HCT116 (cell line): ENCODE measurements at regions of chr19 and their contacts with region 1.

Region 1: GRCh38 chr19:6551607-6552450 is 21.0 kb downstream of the TNFSF9 start:
- DNase-seq: no peak
- ATAC-seq: peak; percentile 98
- H3K4me3 ChIP-seq: peak overlapping the region in 1 of 2 experiments; percentile 38; a peak in 2 of 4 replicates
- H3K27ac ChIP-seq: peak overlapping the region; percentile 49; the same call in 1 of the 2 replicates
- H3K4me1 ChIP-seq: peaks cover 15 to 22% of the 10 kb centered on the region in 2 experiments
- H3K27me3 ChIP-seq: no peaks in the 10 kb centered on the region
- CTCF ChIP-seq: peak; percentile 30 to 65 (median 59); a peak in 5 of 6 replicates
- POLR2A ChIP-seq: no peak
- RAD21 ChIP-seq: peak; percentile 54

Region 2: DNA sequence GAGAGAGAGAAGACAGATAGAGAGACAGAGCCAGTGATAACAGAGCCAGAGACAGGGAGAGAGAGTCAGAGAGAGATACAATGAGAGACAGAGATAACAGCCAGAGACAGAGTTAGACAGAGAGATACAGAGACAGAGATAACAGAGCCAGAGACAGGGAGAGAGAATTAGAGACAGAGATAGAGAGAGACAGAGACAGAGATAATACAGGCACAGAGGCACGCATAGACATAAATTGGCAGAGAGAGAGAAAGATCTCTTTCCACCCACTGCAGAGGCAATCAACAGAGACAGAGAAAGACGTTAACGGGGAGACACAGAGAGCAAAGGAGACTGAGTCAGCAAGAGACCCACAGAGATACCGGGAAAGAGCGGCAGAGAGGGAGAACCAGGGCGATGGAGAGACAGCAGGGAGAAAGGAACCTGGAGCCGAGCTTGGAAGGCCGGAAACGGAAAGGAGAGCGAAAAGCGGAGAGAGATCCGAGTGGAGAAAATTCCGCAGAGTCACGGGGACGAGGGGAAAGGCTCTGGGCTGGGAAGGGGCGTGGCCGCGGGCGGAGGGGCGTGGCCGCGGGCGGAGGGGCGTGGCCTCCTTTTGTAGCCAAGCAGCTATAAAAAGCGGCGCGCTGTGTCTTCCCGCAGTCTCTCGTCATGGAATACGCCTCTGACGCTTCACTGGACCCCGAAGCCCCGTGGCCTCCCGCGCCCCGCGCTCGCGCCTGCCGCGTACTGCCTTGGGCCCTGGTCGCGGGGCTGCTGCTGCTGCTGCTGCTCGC is 21.3 kb before region 1 on chr19 and contains the start of gene TNFSF9:
- CTCF ChIA-PET with region 1: no interaction called
- POLR2A ChIA-PET with region 1: interaction called, 12 read pairs
- RAD21 ChIA-PET with region 1: no interaction called
- intact Hi-C with region 1: no loop called
- DNase-seq: peak; percentile 70
- ATAC-seq: peak; percentile 85
- H3K4me3 ChIP-seq: peak within 1 kb of the TSS; percentile 91 to 95
- H3K27ac ChIP-seq: peak within 1 kb of the TSS; percentile 68
- H3K4me1 ChIP-seq: peaks cover 10 to 33% of the 10 kb centered on the region in 2 experiments
- H3K27me3 ChIP-seq: no peaks in the 10 kb centered on the region
- CTCF ChIP-seq: no peak
- POLR2A ChIP-seq: peak; percentile 99
- RAD21 ChIP-seq: no peak
- total RNA-seq, gene TNFSF9: 25.1 TPM

Region 3: DNA sequence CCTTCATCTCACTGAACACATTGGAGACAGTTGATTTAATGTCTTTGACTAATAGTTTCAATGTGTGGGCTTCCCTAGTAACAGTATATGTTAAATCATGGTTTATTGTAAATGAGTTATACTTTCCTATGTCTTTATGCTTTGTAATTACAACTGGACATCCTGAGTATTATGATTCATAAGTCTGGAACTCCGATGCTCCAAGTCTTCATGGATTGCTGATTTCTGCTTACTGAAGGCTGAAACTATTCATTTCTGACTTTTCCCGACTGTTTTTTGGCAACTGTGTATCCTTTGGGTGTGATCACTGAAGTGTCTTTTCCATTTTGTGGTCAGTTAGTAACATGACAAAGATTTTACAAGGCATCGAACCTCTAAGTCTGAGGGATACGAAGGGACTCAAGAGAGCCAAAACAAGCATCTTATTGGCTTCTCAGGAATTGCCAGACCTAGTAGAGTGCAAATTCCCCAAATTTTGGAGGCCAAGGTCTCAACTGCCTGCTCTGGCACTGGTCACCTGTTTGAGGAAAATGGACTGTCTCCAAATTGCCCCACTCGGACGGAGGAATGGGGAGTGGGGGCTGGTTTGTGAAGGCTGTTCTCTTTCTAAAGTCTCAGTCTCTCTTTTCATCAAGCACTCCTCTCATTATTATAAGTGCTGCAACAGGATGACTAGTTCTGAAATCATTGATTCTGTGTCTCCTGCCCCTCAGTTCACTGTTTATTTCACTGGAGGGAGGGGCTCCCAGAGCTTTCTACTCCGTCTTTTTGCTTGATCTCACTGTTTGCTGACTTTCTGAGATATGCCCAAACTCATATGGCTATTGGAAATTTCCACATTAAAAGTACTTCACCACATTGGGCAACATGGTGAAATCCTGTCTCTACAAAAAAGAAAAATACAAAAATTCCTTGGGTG is 59.4 kb after region 1 on chr19:
- CTCF ChIA-PET with region 1: no interaction called
- POLR2A ChIA-PET with region 1: no interaction called
- RAD21 ChIA-PET with region 1: no interaction called
- intact Hi-C with region 1: no loop called
- DNase-seq: peak; percentile 40
- ATAC-seq: no peak
- H3K4me3 ChIP-seq: no peak overlapping the region
- H3K27ac ChIP-seq: peak overlapping the region; percentile 35; the same call in 1 of the 2 replicates
- H3K4me1 ChIP-seq: peaks cover 9 to 15% of the 10 kb centered on the region in 2 experiments
- H3K27me3 ChIP-seq: no peaks in the 10 kb centered on the region
- CTCF ChIP-seq: no peak
- POLR2A ChIP-seq: no peak
- RAD21 ChIP-seq: no peak